Panc1 (cell line): ENCODE measurements at regions of chr1 and their contacts with region 1.

Region 1: DNA sequence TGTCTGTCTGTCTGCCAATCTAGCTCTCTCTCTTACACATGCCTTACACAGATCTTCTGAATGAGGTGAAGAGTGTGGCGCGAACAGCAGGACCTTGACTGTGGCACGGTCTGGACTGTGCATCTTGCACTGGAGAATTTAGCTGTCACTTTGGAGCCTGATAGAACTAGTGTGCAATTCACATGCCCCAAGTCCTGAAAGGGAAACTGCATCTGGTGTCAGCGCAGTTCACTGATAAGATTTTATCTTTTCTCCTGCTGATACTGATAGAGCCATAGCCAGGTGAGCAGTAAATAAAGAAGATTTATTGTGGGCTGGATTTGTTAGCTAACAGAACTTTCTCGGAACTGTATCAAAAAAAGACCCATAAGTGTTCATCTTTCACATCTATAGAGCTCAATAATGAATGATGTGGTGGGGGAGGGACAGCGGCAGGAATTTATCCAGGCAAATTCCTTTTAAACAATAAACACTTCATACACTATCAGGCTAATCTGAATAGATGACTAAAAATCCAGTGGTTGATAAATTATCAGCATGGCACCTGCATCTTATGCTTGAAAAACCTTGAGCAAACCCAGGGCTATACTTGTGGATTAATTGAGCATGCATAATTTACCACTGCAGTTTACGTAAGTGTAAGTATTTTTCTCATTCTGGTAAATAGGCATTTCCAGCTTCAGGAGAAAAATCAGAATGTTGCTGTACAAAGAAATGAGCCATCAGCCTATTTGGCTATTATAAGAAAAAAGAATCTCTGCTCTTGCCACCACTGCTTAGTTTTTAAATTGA is 104.1 kb downstream of the NTNG1 start:
- DNase-seq: no peak
- ATAC-seq: no peak
- H3K4me3 ChIP-seq: no peak overlapping the region
- H3K27ac ChIP-seq: no peak overlapping the region
- H3K4me1 ChIP-seq: no peaks in the 10 kb centered on the region
- H3K27me3 ChIP-seq: no peaks in the 10 kb centered on the region
- CTCF ChIP-seq: no peak

Region 2: DNA sequence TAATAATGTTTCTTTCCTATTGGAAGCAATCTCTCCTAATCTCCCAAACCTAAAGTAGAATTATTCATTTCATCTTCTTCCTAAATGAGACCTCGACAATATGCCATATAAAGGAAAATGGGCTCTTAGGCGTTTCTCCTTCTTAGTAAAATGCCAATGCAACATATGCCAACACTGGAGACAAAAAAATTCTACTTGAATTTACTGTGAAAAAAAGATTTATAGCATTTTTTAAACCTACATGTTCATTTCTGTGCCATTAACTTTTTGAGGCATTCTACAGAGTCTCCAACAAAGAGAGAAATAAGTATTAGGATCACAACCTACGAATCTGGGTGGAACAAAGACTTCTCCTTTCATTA is 1795.7 kb after region 1 on chr1:
- CTCF ChIA-PET with region 1: no interaction called
- POLR2A ChIA-PET with region 1: interaction called, 10 read pairs
- in situ Hi-C with region 1: no loop called
- intact Hi-C with region 1: no loop called
- DNase-seq: no peak
- ATAC-seq: no peak
- H3K4me3 ChIP-seq: peak overlapping the region; percentile 86 to 87
- H3K27ac ChIP-seq: peak overlapping the region; percentile 63; the same call in 1 of the 2 replicates
- H3K4me1 ChIP-seq: no peaks in the 10 kb centered on the region
- H3K27me3 ChIP-seq: no peaks in the 10 kb centered on the region
- CTCF ChIP-seq: no peak